K562 (cell line): ENCODE measurements at regions of chr4 and their contacts with region 1.

Region 1: DNA sequence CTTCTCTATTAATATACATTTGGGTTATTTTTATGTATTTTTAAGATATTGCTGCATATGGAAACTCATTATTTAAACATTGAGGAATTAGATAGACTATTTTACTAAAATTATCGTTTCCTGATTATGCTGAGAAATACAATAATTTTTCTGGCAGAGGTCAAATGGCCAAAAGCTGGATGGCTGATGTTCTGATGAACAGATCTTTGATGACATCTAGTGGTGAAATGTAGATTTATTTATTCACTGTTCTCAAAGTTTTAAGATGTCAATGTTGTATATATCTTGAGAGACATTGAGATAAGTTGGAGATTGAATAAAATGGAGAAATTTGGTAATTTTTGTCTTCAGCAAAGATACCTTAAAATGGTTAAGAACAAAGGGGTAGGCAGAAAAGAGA is 96.2 kb downstream of the UGT8 start:
- DNase-seq: peak; percentile 5 to 37 (median 16)
- ATAC-seq: no peak
- H3K4me3 ChIP-seq: no peak overlapping the region
- H3K27ac ChIP-seq: no peak overlapping the region
- H3K4me1 ChIP-seq: no peaks in the 10 kb centered on the region
- H3K27me3 ChIP-seq: no peaks in the 10 kb centered on the region
- CTCF ChIP-seq: peak in 1 of 3 experiments; percentile 56; a peak in 2 of 6 replicates
- EP300 ChIP-seq: no peak
- POLR2A ChIP-seq: no peak
- RAD21 ChIP-seq: peak; percentile 63 to 68

Region 2: GRCh38 chr4:113278324-113278934 is 1416.3 kb before region 1 on chr4:
- CTCF ChIA-PET with region 1: no interaction called
- POLR2A ChIA-PET with region 1: no interaction called
- in situ Hi-C with region 1: no loop called
- intact Hi-C with region 1: loop called (anchors 5 kb)
- DNase-seq: peak; percentile 48 to 70 (median 52)
- ATAC-seq: peak; percentile 88
- H3K4me3 ChIP-seq: no peak overlapping the region
- H3K27ac ChIP-seq: no peak overlapping the region
- H3K4me1 ChIP-seq: no peaks in the 10 kb centered on the region
- H3K27me3 ChIP-seq: no peaks in the 10 kb centered on the region
- CTCF ChIP-seq: peak; percentile 53 to 68 (median 54)
- EP300 ChIP-seq: no peak
- POLR2A ChIP-seq: no peak
- RAD21 ChIP-seq: peak; percentile 21 to 37; a peak in 2 of 4 replicates

Region 3: GRCh38 chr4:114673306-114673705 is 21.5 kb before region 1 on chr4:
- CTCF ChIA-PET with region 1: no interaction called
- POLR2A ChIA-PET with region 1: no interaction called
- in situ Hi-C with region 1: no loop called
- intact Hi-C with region 1: no loop called
- DNase-seq: no peak
- ATAC-seq: no peak
- H3K4me3 ChIP-seq: no peak overlapping the region
- H3K27ac ChIP-seq: no peak overlapping the region
- H3K4me1 ChIP-seq: no peaks in the 10 kb centered on the region
- H3K27me3 ChIP-seq: no peaks in the 10 kb centered on the region
- CTCF ChIP-seq: no peak
- EP300 ChIP-seq: no peak
- POLR2A ChIP-seq: no peak
- RAD21 ChIP-seq: no peak

Region 4: GRCh38 chr4:116150152-116150551 is 1455.4 kb after region 1 on chr4:
- CTCF ChIA-PET with region 1: no interaction called
- POLR2A ChIA-PET with region 1: no interaction called
- in situ Hi-C with region 1: no loop called
- intact Hi-C with region 1: no loop called
- DNase-seq: no peak
- ATAC-seq: no peak
- H3K4me3 ChIP-seq: no peak overlapping the region
- H3K27ac ChIP-seq: no peak overlapping the region
- H3K4me1 ChIP-seq: no peaks in the 10 kb centered on the region
- H3K27me3 ChIP-seq: no peaks in the 10 kb centered on the region
- CTCF ChIP-seq: no peak
- EP300 ChIP-seq: no peak
- POLR2A ChIP-seq: no peak
- RAD21 ChIP-seq: no peak